Heart right ventricle (tissue), 16 donors: ENCODE measurements at regions of chr13 and their contacts with region 1.

Region 1: GRCh38 chr13:41652727-41653361 is 195.5 kb downstream of the RGCC start:
- DNase-seq: peak in 1 of 2 donors; percentile 42
- ATAC-seq: peak in 3 of 8 donors; percentile 35 to 49 (median 45)
- H3K4me3 ChIP-seq: no peak overlapping the region
- H3K27ac ChIP-seq: peak overlapping the region in 7 of 10 donors; percentile 17 to 80 (median 35)
- H3K4me1 ChIP-seq: peaks cover 0 to 46% (median 19%) of the 10 kb centered on the region in 9 donors
- H3K27me3 ChIP-seq: no peaks in the 10 kb centered on the region
- CTCF ChIP-seq: peak; percentile 32 to 84 (median 68)

Region 2: DNA sequence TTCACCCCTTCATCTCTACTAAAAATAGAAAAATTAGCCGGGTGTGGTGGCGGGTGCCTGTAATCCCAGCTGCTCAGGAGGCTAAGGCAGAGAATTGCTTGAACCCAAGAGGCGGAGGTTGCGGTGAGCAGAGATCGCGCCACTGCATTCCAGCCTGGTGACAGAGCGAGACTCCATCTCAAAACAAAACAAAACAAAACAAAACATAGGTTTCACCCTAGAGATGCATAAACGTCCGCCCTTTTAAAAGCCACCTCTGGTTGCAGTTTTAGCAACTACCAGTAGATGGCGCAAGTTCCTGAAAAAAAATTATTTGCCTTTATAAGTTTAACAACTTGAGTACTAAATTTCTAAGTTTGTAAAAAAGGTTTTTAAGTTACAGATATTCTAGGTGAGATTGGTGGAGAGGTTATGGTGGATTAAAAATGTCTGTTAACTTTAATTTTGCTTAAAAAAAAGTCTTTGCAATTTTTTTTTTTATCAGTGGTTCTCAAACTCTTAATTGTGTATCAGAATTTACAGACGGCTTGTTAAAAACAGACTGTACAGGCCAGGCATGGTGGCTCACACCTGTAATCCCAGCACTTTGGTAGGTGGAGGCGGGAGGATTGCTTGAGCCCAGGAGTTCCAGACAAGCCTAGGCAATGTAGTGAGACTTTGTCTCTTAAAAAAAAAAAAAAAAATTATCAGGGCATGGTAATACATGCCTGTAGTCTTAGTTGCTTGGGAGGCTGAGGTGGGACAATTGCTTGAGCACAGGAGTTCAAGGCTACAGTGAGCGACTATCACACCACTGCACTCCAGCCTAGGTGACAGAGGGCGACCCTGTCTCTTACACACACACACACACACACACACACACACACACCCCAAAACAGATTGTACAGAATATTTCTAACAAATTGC is 299.7 kb before region 1 on chr13:
- intact Hi-C with region 1: loop called in 8 of 10 experiments (anchors 2 to 10 kb)
- DNase-seq: peak in 1 of 2 donors; percentile 13
- ATAC-seq: peak in 6 of 8 donors; percentile 36 to 59 (median 54)
- H3K4me3 ChIP-seq: no peak overlapping the region
- H3K27ac ChIP-seq: peak overlapping the region in 1 of 10 donors; percentile 5
- H3K4me1 ChIP-seq: peaks cover 0 to 40% (median 0%) of the 10 kb centered on the region in 9 donors
- H3K27me3 ChIP-seq: no peaks in the 10 kb centered on the region
- CTCF ChIP-seq: peak; percentile 78 to 90 (median 83)

Region 3: DNA sequence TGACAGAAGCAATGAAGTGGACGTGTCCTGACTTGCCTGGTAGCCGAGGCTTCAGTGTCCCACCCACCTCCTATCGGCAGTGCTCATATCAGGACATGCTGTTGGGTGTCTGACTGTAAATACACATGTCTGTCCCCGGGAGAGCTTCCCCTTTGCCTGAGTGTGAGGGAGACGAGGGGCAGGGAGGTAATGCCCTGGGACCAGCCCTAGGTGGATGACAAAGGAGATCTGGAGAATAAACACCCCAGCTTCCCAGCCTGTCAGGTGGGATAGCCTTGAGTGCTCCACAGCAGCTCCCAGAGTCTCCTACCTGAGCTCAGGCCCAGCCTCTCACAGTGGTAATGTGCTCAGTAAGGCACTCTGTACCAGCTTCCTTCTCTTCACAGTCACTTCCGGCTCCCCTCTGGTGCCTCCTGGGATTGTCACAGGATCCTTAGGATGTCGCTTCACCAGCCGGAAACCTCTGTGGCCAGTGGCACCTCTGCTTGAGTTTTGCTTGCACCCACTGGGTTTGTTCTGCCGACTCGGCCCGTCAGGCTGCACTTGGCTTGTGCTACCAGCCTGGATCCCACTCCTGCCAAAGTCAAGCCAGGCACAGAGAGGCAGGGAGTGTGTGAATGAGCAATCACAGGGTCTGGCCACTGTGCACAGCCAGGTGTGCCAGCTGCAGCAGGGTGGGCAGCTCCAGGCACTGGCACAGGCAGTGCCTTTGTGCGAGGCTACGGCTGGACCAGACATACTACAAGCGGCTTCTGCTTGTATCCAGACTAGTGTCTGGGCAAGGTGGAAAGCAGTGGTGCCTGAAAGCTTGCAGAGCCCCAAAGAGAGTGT is 249.9 kb before region 1 on chr13:
- intact Hi-C with region 1: loop called in 1 of 10 experiments (anchors 10 kb)
- DNase-seq: no peak
- ATAC-seq: peak in 3 of 8 donors; percentile 22 to 31 (median 25)
- H3K4me3 ChIP-seq: no peak overlapping the region
- H3K27ac ChIP-seq: no peak overlapping the region
- H3K4me1 ChIP-seq: no peaks in the 10 kb centered on the region
- H3K27me3 ChIP-seq: no peaks in the 10 kb centered on the region
- CTCF ChIP-seq: no peak

Region 4: DNA sequence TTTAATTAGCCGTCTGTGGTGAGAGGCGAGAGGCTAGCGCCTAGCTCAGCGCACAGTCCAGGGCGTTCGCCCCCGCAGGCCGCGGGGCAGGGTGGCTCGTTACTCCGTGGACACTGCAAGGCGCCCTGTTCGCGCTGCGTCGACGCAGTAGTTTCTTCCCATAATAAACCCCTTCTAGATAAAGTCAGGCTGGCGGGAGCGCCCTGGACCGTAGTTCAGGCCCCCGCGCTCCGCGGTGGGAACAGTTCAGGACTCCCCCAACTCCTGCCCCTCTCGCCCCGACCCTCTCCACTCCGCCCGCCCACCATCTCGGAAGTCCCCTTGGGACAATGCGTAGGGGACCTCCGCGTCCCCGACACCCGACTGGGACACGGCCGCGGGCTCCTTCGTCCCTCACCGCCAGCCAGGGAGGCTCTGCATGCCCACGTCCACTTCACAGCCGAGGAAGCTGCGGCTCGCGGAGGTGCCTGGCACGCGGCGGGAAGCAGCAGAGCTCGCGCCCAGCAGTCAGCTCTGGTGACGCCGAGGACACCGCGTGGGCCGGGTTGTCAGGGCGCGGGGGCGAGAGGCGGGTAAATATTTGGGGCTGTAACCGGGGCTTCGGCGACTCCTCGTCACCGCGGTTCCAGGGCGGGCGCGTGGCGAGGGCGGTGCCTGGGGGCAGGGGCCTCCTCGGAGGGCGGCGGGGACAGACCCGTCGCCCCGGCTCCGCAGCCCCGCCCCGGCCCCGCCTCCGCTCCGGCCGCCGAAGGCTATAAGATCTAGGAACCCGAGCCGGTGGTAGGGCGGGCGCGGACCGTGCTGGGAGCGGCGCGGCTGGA is 195.9 kb before region 1 on chr13 and contains the start of gene RGCC:
- intact Hi-C with region 1: loop called in 7 of 10 experiments (anchors 2 to 10 kb)
- DNase-seq: peak; percentile 80 to 83
- ATAC-seq: peak; percentile 83 to 92 (median 90)
- H3K4me3 ChIP-seq: peak within 1 kb of the TSS; percentile 62 to 91 (median 74)
- H3K27ac ChIP-seq: peak within 1 kb of the TSS; percentile 76 to 91 (median 84)
- H3K4me1 ChIP-seq: peaks cover 0 to 34% (median 19%) of the 10 kb centered on the region in 9 donors
- H3K27me3 ChIP-seq: peaks cover 0 to 33% (median 11%) of the 10 kb centered on the region in 7 donors
- CTCF ChIP-seq: no peak
- total RNA-seq, gene RGCC: 15.6 to 63.2 (median 40.0) TPM

Region 5: GRCh38 chr13:41492404-41493260 is 160.2 kb before region 1 on chr13:
- intact Hi-C with region 1: loop called in 1 of 10 experiments (anchors 10 kb)
- DNase-seq: no peak
- ATAC-seq: peak in 2 of 8 donors; percentile 3 to 22
- H3K4me3 ChIP-seq: no peak overlapping the region
- H3K27ac ChIP-seq: peak overlapping the region in 7 of 10 donors; percentile 30 to 86 (median 68)
- H3K4me1 ChIP-seq: peaks cover 14 to 59% (median 43%) of the 10 kb centered on the region in 9 donors
- H3K27me3 ChIP-seq: no peaks in the 10 kb centered on the region
- CTCF ChIP-seq: no peak

Region 6: GRCh38 chr13:41562083-41562482 is 90.8 kb before region 1 on chr13:
- intact Hi-C with region 1: loop called in 1 of 10 experiments (anchors 5 kb)
- DNase-seq: peak; percentile 60 to 68
- ATAC-seq: peak; percentile 52 to 89 (median 71)
- H3K4me3 ChIP-seq: no peak overlapping the region
- H3K27ac ChIP-seq: peak overlapping the region in 2 of 10 donors; percentile 18 to 54
- H3K4me1 ChIP-seq: peaks cover 3 to 49% (median 35%) of the 10 kb centered on the region in 9 donors
- H3K27me3 ChIP-seq: no peaks in the 10 kb centered on the region
- CTCF ChIP-seq: no peak